Gastrocnemius medialis (tissue), 4 donors: ENCODE measurements at regions of chr5 and their contacts with region 1.

Region 1: GRCh38 chr5:173764321-173765029 is 123.7 kb upstream of the CPEB4 start:
- DNase-seq: peak; percentile 91 to 96
- ATAC-seq: peak; percentile 59 to 65
- H3K4me3 ChIP-seq: no peak overlapping the region
- H3K27ac ChIP-seq: peak overlapping the region; percentile 90 to 95 (median 94)
- H3K4me1 ChIP-seq: peaks cover 57 to 63% of the 10 kb centered on the region in 2 donors
- H3K27me3 ChIP-seq: no peaks in the 10 kb centered on the region
- CTCF ChIP-seq: no peak
- POLR2A ChIP-seq: peak; percentile 8 to 57

Region 2: GRCh38 chr5:172868924-172869591 is 895.4 kb before region 1 on chr5:
- in situ Hi-C with region 1: no loop called
- intact Hi-C with region 1: loop called (anchors 10 kb)
- DNase-seq: peak; percentile 94 to 97
- ATAC-seq: peak; percentile 65 to 67
- H3K4me3 ChIP-seq: peak overlapping the region in 3 of 4 donors; percentile 6 to 23 (median 18)
- H3K27ac ChIP-seq: peak overlapping the region; percentile 85 to 98 (median 94)
- H3K4me1 ChIP-seq: peaks cover 93 to 95% of the 10 kb centered on the region in 2 donors
- H3K27me3 ChIP-seq: no peaks in the 10 kb centered on the region
- CTCF ChIP-seq: peak in 4 of 5 experiments; percentile 41 to 52 (median 45)
- POLR2A ChIP-seq: peak; percentile 9 to 68

Region 3: DNA sequence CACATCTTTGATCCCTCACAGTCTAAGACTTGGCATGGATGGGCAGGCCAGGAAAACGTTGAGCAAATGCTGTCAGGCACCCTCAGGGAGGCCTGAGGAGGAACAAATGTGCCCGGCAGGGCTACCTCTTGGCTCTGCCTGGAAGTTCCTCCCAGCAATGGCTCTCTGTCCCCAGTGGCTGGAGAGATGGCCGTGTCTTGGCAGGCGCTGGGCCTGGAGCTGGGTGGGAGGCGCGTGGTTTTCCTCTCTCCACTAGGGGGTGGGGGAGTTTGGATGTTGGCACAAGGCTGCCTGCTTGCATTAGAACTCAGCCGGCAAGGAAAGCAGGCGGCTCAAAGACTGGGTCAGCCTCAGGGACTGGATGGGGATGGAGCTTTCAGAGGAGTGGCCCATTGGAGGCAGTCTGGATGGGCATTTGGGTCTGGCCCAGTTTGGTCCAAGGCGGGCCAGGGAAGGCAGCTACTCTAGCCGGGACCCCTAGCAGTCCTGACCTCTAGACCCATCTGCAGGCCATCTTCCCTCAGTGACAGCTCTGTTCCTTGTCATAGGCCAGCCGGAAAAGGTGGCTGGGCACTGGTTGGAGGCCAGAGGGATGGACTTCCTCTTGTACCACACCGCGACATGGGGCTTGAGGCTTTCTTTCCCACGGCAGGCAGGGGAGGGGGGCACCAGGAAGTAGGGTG is 368.0 kb before region 1 on chr5:
- in situ Hi-C with region 1: no loop called
- intact Hi-C with region 1: no loop called
- DNase-seq: no peak
- ATAC-seq: no peak
- H3K4me3 ChIP-seq: no peak overlapping the region
- H3K27ac ChIP-seq: no peak overlapping the region
- H3K4me1 ChIP-seq: no peaks in the 10 kb centered on the region
- H3K27me3 ChIP-seq: no peaks in the 10 kb centered on the region
- CTCF ChIP-seq: no peak
- POLR2A ChIP-seq: no peak

Region 4: GRCh38 chr5:173671121-173671949 is 93.1 kb before region 1 on chr5:
- in situ Hi-C with region 1: no loop called
- intact Hi-C with region 1: loop called (anchors 1 kb)
- DNase-seq: peak; percentile 92 to 97
- ATAC-seq: peak; percentile 85 to 88
- H3K4me3 ChIP-seq: peak overlapping the region; percentile 32 to 48 (median 44)
- H3K27ac ChIP-seq: peak overlapping the region; percentile 87 to 91 (median 88)
- H3K4me1 ChIP-seq: peaks cover 35 to 44% of the 10 kb centered on the region in 2 donors
- H3K27me3 ChIP-seq: no peaks in the 10 kb centered on the region
- CTCF ChIP-seq: no peak
- POLR2A ChIP-seq: peak; percentile 66 to 67

Region 5: DNA sequence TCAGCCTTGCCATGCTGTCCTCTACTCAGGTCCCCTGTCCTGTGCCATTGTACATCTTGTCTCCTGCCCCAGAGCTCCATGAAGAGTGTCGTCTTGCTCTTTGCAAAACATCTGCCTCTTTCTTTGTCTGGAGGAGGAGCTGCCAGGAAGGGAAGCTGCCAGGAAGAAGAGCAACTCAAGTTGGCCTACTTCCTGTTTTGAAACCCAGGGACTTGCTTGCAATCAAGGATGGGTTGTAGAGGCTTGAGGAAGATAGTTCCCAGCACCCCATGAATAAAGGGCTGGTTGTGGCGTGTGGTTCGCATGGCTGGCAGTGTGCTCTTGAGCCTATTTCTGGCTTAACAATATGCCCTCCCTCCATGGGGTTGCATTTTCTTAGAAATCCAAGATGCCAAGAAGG is 70.7 kb after region 1 on chr5:
- in situ Hi-C with region 1: no loop called
- intact Hi-C with region 1: loop called (anchors 1 kb)
- DNase-seq: peak in 1 of 2 donors; percentile 52
- ATAC-seq: peak; percentile 4 to 19
- H3K4me3 ChIP-seq: no peak overlapping the region
- H3K27ac ChIP-seq: peak overlapping the region; percentile 57 to 87 (median 83)
- H3K4me1 ChIP-seq: peaks cover 34% of the 10 kb centered on the region in 2 donors
- H3K27me3 ChIP-seq: no peaks in the 10 kb centered on the region
- CTCF ChIP-seq: no peak
- POLR2A ChIP-seq: no peak

Region 6: GRCh38 chr5:173963867-173964441 is 199.5 kb after region 1 on chr5:
- in situ Hi-C with region 1: loop called (anchors 10 to 25 kb)
- intact Hi-C with region 1: loop called (anchors 2 kb)
- DNase-seq: no peak
- ATAC-seq: peak in 1 of 2 donors; percentile 13
- H3K4me3 ChIP-seq: peak overlapping the region in 3 of 4 donors; percentile 2 to 30 (median 4)
- H3K27ac ChIP-seq: peak overlapping the region; percentile 76 to 88 (median 84)
- H3K4me1 ChIP-seq: peaks cover 16 to 25% of the 10 kb centered on the region in 2 donors
- H3K27me3 ChIP-seq: no peaks in the 10 kb centered on the region
- CTCF ChIP-seq: no peak
- POLR2A ChIP-seq: peak in 1 of 2 donors; percentile 46